Heart right ventricle (tissue), 16 donors: ENCODE measurements at regions of chr11 and their contacts with region 1.

Region 1: DNA sequence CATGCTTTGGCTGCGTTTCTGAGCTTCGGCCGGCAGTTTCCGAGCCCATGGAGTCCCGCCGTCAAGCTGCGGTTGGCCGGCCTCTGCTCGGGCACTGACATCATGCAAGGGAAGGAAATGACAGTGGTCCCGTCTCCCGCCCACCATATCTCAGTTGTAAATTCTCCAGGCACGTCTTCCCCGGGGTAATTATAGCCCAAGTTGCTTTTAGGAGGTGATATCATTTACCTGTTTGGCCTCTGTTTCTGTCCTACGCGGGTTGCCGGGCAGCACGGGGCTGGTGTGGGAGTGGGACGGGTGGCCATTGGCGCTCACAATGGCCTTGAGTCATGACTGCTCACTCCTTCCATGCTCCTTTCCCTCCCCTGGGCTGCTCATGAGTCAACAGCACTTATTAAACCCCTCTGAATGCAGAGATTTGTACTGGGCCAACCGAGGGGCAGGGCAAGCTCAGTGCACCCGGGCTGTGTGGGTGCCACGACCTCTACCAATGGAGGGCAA is 4.2 kb upstream of the ANO1 start:
- DNase-seq: peak in 1 of 2 donors; percentile 75
- ATAC-seq: peak; percentile 60 to 88 (median 75)
- H3K4me3 ChIP-seq: no peak overlapping the region
- H3K27ac ChIP-seq: peak overlapping the region in 5 of 10 donors; percentile 42 to 77 (median 73)
- H3K4me1 ChIP-seq: peaks cover 14 to 50% (median 22%) of the 10 kb centered on the region in 9 donors
- H3K27me3 ChIP-seq: peaks cover 0 to 73% (median 56%) of the 10 kb centered on the region in 7 donors
- CTCF ChIP-seq: no peak

Region 2: DNA sequence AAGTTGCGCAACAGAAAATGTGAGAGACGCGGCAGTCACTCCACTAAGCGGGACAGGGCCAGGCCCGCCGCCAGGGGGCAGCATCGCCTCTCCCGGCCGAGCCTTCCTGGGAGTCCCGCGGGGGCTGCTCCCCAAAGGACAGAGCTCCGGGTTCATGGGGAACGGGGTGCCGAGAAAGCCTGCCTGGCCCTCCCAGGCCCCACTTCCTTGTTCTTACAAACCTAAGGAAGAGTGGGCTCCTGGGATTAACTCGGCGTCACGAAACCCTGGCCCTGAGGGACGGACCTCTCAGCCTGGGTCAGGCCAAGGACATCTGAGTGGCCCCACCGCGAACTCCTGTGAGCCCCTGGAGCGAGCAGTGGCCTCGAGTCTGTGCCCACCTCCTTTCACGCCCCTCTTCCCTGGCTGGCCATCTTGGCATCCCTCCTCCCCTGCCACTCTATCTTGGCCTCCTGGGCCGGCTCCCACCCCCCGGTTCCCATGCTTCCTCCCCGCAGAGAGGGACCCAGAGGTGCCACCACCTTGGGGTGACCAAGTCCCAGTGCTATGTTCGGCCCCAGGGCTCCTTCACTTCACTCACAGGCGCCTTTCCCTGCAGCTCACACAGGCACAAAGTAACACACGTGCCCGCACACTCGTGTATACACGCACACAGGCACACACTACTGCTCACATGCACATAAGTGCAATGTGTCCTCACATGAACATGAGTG is 154.8 kb before region 1 on chr11:
- intact Hi-C with region 1: loop called in 3 of 10 experiments (anchors 5 to 10 kb)
- DNase-seq: peak; percentile 80 to 86
- ATAC-seq: peak; percentile 63 to 79 (median 72)
- H3K4me3 ChIP-seq: peak overlapping the region in 3 of 10 donors; percentile 2 to 33 (median 9)
- H3K27ac ChIP-seq: peak overlapping the region in 9 of 10 donors; percentile 2 to 80 (median 56)
- H3K4me1 ChIP-seq: peaks cover 13 to 37% (median 32%) of the 10 kb centered on the region in 9 donors
- H3K27me3 ChIP-seq: peaks cover 0 to 21% (median 4%) of the 10 kb centered on the region in 7 donors
- CTCF ChIP-seq: peak; percentile 89 to 99 (median 96)

Region 3: DNA sequence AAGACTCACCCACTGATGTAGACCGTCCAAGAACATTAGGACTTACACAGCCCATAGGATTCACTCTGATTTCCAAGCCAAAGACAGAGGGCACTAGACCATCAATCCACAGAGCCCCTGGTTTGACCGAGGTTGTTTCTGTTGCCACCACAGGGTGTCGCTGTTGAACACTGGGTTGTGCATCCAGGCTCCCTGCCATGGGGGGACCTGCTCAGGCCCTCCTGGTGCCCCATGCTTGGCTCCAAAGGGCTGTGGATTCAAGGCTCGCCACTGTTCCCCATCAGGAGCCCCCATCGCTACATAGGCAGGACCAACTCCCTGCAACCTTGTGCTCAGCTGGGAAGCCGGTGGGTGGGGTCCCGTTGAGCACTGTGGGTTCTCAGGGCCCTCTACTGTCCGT is 123.8 kb before region 1 on chr11:
- intact Hi-C with region 1: loop called in 2 of 10 experiments (anchors 10 kb)
- DNase-seq: no peak
- ATAC-seq: peak in 1 of 8 donors; percentile 26
- H3K4me3 ChIP-seq: no peak overlapping the region
- H3K27ac ChIP-seq: no peak overlapping the region
- H3K4me1 ChIP-seq: peaks cover 0 to 19% (median 7%) of the 10 kb centered on the region in 9 donors
- H3K27me3 ChIP-seq: peaks cover 0 to 11% (median 0%) of the 10 kb centered on the region in 7 donors
- CTCF ChIP-seq: peak in 7 of 9 donors; percentile 37 to 59 (median 49)

Region 4: DNA sequence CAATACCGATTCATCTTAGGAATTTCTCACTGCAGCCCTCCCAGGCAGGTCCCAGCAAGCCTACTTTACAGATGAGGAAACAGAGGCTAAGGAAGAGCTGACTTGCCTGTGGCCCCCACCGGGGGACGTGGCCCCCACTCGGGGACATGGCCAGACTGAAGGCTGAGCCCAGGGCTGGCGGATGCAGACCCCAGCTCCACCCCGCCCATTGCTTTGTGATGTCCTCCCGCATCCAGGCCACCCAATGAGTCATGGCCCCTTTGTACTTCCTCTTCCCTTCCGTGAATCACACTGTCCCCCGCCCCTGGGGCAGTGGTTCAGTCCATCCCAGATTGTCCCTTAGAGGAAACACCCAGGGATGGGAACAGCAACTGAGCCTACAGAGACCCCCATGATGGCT is 111.8 kb before region 1 on chr11:
- intact Hi-C with region 1: loop called in 2 of 10 experiments (anchors 10 kb)
- DNase-seq: no peak
- ATAC-seq: peak in 4 of 8 donors; percentile 49 to 56 (median 54)
- H3K4me3 ChIP-seq: no peak overlapping the region
- H3K27ac ChIP-seq: no peak overlapping the region
- H3K4me1 ChIP-seq: no peaks in the 10 kb centered on the region
- H3K27me3 ChIP-seq: peaks cover 0 to 10% (median 0%) of the 10 kb centered on the region in 7 donors
- CTCF ChIP-seq: no peak

Region 5: GRCh38 chr11:70029115-70029830 is 44.6 kb before region 1 on chr11:
- intact Hi-C with region 1: no loop called
- DNase-seq: no peak
- ATAC-seq: peak in 6 of 8 donors; percentile 29 to 56 (median 42)
- H3K4me3 ChIP-seq: no peak overlapping the region
- H3K27ac ChIP-seq: peak overlapping the region in 6 of 10 donors; percentile 1 to 65 (median 38)
- H3K4me1 ChIP-seq: peaks cover 0 to 15% (median 2%) of the 10 kb centered on the region in 9 donors
- H3K27me3 ChIP-seq: peaks cover 0 to 3% (median 0%) of the 10 kb centered on the region in 7 donors
- CTCF ChIP-seq: peak in 1 of 9 donors; percentile 10